GM12878 (cell line): ENCODE measurements at regions of chr2 and their contacts with region 1.

Region 1: GRCh38 chr2:168480825-168481585 is 24.9 kb downstream of the CERS6 start:
- DNase-seq: no peak
- ATAC-seq: peak; percentile 16; the same call in 1 of the 3 replicates
- H3K4me3 ChIP-seq: no peak overlapping the region
- H3K27ac ChIP-seq: no peak overlapping the region
- H3K4me1 ChIP-seq: no peaks in the 10 kb centered on the region; the same call in 1 of the 2 replicates
- H3K27me3 ChIP-seq: no peaks in the 10 kb centered on the region
- CTCF ChIP-seq: no peak
- EP300 ChIP-seq: no peak
- POLR2A ChIP-seq: no peak
- RAD21 ChIP-seq: no peak

Region 2: GRCh38 chr2:168470320-168471162 is 10.5 kb before region 1 on chr2:
- CTCF ChIA-PET with region 1: interaction called, 7 read pairs
- POLR2A ChIA-PET with region 1: interaction called, 3 read pairs
- RAD21 ChIA-PET with region 1: interaction called, 4 read pairs
- SMC1A ChIA-PET with region 1: interaction called, 12 read pairs
- in situ Hi-C with region 1: no loop called
- intact Hi-C with region 1: no loop called
- DNase-seq: no peak
- ATAC-seq: peak; percentile 47
- H3K4me3 ChIP-seq: peak overlapping the region; percentile 8; the same call in 1 of the 2 replicates
- H3K27ac ChIP-seq: peak overlapping the region; percentile 71
- H3K4me1 ChIP-seq: peaks cover 52% of the 10 kb centered on the region
- H3K27me3 ChIP-seq: no peaks in the 10 kb centered on the region
- CTCF ChIP-seq: no peak
- EP300 ChIP-seq: no peak
- POLR2A ChIP-seq: no peak
- RAD21 ChIP-seq: no peak

Region 3: DNA sequence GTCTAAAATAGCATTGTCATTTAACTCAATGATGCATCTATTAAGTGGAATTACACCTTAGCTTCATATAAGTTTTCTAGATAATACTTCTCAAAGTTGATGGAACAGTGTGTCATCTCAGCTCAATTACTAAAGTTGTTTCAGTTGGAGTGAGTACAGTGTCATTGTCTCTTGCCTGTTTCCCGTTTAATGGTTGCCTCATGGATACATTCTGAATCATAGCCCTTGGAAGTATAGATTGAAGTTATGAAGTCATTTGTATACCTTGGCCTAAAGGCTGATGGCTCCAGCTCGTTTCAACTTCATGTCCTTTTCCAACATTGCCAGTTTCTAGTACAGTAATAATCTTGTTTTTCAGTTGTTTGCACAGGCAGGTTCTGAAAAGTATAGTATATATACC is 190.9 kb after region 1 on chr2:
- CTCF ChIA-PET with region 1: no interaction called
- POLR2A ChIA-PET with region 1: no interaction called
- RAD21 ChIA-PET with region 1: no interaction called
- SMC1A ChIA-PET with region 1: no interaction called
- in situ Hi-C with region 1: no loop called
- intact Hi-C with region 1: no loop called
- DNase-seq: no peak
- ATAC-seq: no peak
- H3K4me3 ChIP-seq: no peak overlapping the region
- H3K27ac ChIP-seq: no peak overlapping the region
- H3K4me1 ChIP-seq: no peaks in the 10 kb centered on the region
- H3K27me3 ChIP-seq: no peaks in the 10 kb centered on the region
- CTCF ChIP-seq: no peak
- EP300 ChIP-seq: no peak
- POLR2A ChIP-seq: no peak
- RAD21 ChIP-seq: no peak

Region 4: DNA sequence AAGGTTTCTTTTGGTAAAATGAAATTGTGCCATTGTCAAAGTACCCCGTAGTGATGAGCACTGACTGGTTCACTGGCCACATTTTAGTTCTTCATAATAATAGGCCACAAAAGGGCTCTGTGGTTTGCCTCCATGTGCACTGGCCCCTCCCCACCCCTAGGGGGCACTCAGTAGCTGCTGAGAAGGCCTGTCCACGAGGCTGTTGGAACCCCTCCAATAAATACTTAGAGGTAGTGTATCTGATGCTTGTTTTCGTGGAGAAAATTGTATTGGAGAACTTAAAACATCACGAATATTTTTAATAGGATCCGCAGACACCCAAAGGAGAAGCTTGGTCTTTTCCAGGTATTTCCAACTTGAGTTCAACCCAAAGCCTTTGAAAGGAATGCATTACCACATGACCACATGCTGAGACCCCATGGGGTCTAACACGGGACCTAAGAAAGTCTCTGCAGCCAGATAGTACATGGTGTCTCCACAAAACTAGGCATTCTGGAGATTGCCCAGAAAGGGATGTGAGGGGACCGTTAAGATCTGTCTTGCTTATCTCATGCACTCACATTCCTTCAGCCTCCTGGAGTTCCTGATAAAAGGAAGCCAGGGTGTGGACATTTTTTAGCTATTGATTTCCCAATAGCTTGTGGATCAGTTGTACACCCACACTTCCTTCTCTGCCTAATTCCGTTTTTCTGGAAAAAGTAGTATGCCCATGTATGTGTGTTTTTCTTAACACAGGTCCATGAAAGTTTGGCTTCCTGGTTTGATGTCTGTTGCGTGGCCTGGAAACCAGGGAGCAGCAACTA is 292.9 kb after region 1 on chr2:
- CTCF ChIA-PET with region 1: no interaction called
- POLR2A ChIA-PET with region 1: no interaction called
- RAD21 ChIA-PET with region 1: no interaction called
- SMC1A ChIA-PET with region 1: no interaction called
- in situ Hi-C with region 1: no loop called
- intact Hi-C with region 1: no loop called
- DNase-seq: no peak
- ATAC-seq: peak; percentile 92
- H3K4me3 ChIP-seq: no peak overlapping the region
- H3K27ac ChIP-seq: no peak overlapping the region
- H3K4me1 ChIP-seq: no peaks in the 10 kb centered on the region
- H3K27me3 ChIP-seq: no peaks in the 10 kb centered on the region
- CTCF ChIP-seq: peak; percentile 57 to 77 (median 66)
- EP300 ChIP-seq: no peak
- POLR2A ChIP-seq: no peak
- RAD21 ChIP-seq: peak; percentile 63